ENCODE measurements at regions of chr2 and their contacts with region 1.

Region 1: GRCh38 chr2:144516981-144517865 is 2.7 kb downstream of the ZEB2 start:
- DNase-seq: peak in 1 of 2 donors; percentile 44
- ATAC-seq: peak; percentile 45

Region 2: GRCh38 chr2:143433251-143433650 is 1084.0 kb before region 1 on chr2:
- intact Hi-C with region 1: loop called in 1 of 2 experiments (anchors 10 kb)
- DNase-seq: no peak
- ATAC-seq: no peak